Activated B cell treated with CpG ODN at 0.5 μM for 24 hours (primary cell): ENCODE measurements at regions of chr11 and their contacts with region 1.

Region 1: GRCh38 chr11:34565417-34566207 is 52.0 kb upstream of the ELF5 start:
- DNase-seq: no peak
- ATAC-seq: peak; percentile 71
- H3K4me3 Mint-ChIP-seq: no peak overlapping the region
- H3K27ac Mint-ChIP-seq: no peak overlapping the region
- H3K4me1 Mint-ChIP-seq: no peaks in the 10 kb centered on the region
- H3K27me3 Mint-ChIP-seq: peaks cover 27% of the 10 kb centered on the region
- CTCF ChIP-seq: no peak

Region 2: GRCh38 chr11:34706709-34707461 is 141.3 kb after region 1 on chr11:
- CTCF ChIA-PET with region 1: no interaction called
- POLR2A ChIA-PET with region 1: no interaction called
- intact Hi-C with region 1: no loop called
- DNase-seq: no peak
- ATAC-seq: no peak
- H3K4me3 Mint-ChIP-seq: no peak overlapping the region
- H3K27ac Mint-ChIP-seq: no peak overlapping the region
- H3K4me1 Mint-ChIP-seq: no peaks in the 10 kb centered on the region
- H3K27me3 Mint-ChIP-seq: peaks cover under 1% of the 10 kb centered on the region
- CTCF ChIP-seq: no peak

Region 3: GRCh38 chr11:34890812-34891211 is 325.2 kb after region 1 on chr11:
- CTCF ChIA-PET with region 1: interaction called, 4 read pairs
- POLR2A ChIA-PET with region 1: no interaction called
- intact Hi-C with region 1: loop called (anchors 1 kb)
- DNase-seq: no peak
- ATAC-seq: no peak
- H3K4me3 Mint-ChIP-seq: no peak overlapping the region
- H3K27ac Mint-ChIP-seq: no peak overlapping the region
- H3K4me1 Mint-ChIP-seq: no peaks in the 10 kb centered on the region
- H3K27me3 Mint-ChIP-seq: no peaks in the 10 kb centered on the region
- CTCF ChIP-seq: no peak